MCF 10A (cell line): ENCODE measurements at regions of chr15 and their contacts with region 1.

Region 1: GRCh38 chr15:34587717-34588674 is 4.5 kb upstream of the GOLGA8B start:
- DNase-seq: peak; percentile 88
- H3K4me3 Mint-ChIP-seq: peak overlapping the region; percentile 73
- H3K27ac Mint-ChIP-seq: peak overlapping the region; percentile 52
- H3K4me1 Mint-ChIP-seq: no peaks in the 10 kb centered on the region
- H3K27me3 Mint-ChIP-seq: peaks cover 11% of the 10 kb centered on the region
- CTCF ChIP-seq: peak; percentile 70

Region 2: DNA sequence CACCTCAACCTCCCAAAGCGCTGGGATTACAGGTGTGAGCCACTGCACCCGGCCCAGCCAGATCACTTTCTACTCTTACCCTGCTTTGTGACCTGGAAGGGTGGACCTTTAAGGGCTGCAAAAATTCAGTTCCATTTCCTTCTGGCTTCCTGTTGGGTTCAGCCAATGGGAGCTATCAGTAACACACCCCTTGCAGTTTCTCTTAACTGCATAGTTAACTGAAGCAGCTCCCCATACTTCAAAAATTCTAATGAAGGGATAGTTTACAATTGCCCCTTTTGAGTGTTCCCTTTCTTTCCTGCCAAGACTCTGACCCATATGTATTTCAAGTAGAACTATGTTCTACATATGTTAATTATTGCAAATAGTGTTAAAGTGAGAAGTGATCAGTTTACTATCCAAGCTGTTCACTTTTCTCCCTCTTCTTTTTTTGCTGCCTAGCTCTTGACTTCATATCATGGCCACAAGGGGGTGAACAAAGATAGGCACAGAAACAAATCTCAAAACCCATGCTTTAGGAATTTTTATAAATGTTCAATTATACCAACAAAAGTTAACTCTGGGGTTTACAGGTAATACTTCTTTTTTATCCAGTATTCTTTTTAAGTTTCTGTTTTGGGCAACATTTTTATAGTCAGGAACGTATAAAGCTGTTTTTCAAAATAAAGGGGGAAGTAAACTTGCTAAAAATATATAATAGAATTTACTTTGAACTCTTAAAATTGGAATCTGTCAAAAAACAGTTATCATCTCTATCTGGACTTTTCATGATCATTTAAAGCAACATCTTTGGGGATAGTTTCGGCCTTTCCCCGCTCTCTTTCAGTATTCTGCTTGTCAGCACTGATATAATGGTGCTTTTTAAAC is 478.0 kb before region 1 on chr15:
- CTCF ChIA-PET with region 1: interaction called, 6 read pairs
- POLR2A ChIA-PET with region 1: interaction called, 4 read pairs
- intact Hi-C with region 1: loop called (anchors 1 kb)
- DNase-seq: peak; percentile 59
- H3K4me3 Mint-ChIP-seq: no peak overlapping the region
- H3K27ac Mint-ChIP-seq: no peak overlapping the region
- H3K4me1 Mint-ChIP-seq: no peaks in the 10 kb centered on the region
- H3K27me3 Mint-ChIP-seq: no peaks in the 10 kb centered on the region
- CTCF ChIP-seq: peak; percentile 64

Region 3: DNA sequence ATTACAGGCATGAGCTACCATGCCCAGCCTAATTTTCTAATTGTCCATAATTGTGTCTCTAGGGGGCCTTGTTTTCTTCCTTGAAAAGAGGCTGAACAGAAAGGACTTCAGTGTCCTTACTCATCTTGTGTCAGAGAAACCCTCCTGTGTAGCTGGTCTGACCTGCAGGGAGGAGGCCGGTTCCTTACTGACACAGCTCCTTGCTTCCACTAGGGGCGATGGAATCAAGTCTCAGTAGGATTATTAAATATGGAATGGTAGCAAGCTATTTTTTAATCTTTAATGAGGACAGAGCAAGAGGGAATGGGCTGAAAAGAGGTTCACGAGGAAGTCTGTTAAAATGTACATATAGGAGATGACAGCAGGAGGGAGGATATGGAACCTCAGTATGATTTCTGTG is 229.6 kb before region 1 on chr15:
- CTCF ChIA-PET with region 1: interaction called, 10 read pairs
- POLR2A ChIA-PET with region 1: no interaction called
- intact Hi-C with region 1: no loop called
- DNase-seq: no peak
- H3K4me3 Mint-ChIP-seq: no peak overlapping the region
- H3K27ac Mint-ChIP-seq: no peak overlapping the region
- H3K4me1 Mint-ChIP-seq: peaks cover 13% of the 10 kb centered on the region
- H3K27me3 Mint-ChIP-seq: no peaks in the 10 kb centered on the region
- CTCF ChIP-seq: peak; percentile 17

Region 4: DNA sequence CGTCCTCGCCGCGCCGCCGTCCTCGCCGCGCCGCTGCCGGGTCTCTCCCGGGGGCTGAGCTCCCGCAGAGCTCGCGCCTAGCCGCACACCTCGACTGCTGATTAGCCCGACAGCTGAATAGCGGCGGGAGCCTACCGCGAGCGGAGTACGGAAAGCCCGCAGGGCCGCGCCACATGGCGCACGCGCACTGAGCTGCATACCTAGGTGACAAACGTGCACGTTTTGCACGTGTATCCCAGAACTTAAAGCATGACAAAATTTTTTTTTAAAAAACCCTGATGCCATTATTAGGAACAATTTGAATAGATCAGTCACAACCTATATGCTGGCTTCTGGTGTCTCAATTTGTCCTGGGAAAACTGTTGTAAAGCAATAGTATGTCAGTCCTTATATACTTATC is 150.3 kb before region 1 on chr15 and contains the start of gene GOLGA8A:
- CTCF ChIA-PET with region 1: interaction called, 8 read pairs
- POLR2A ChIA-PET with region 1: interaction called, 6 read pairs
- intact Hi-C with region 1: loop called (anchors 2 kb)
- DNase-seq: peak; percentile 76
- H3K4me3 Mint-ChIP-seq: peak within 1 kb of the TSS; percentile 82
- H3K27ac Mint-ChIP-seq: peak within 1 kb of the TSS; percentile 87
- H3K4me1 Mint-ChIP-seq: peaks cover 17% of the 10 kb centered on the region
- H3K27me3 Mint-ChIP-seq: no peaks in the 10 kb centered on the region
- CTCF ChIP-seq: no peak
- total RNA-seq, gene GOLGA8A: 173 and 192 TPM in 2 replicates

Region 5: GRCh38 chr15:34610354-34610753 is 22.4 kb after region 1 on chr15:
- CTCF ChIA-PET with region 1: no interaction called
- POLR2A ChIA-PET with region 1: no interaction called
- intact Hi-C with region 1: no loop called
- DNase-seq: peak; percentile 25
- H3K4me3 Mint-ChIP-seq: no peak overlapping the region
- H3K27ac Mint-ChIP-seq: no peak overlapping the region
- H3K4me1 Mint-ChIP-seq: peaks cover 5% of the 10 kb centered on the region
- H3K27me3 Mint-ChIP-seq: peaks cover 89% of the 10 kb centered on the region
- CTCF ChIP-seq: peak; percentile 23

Region 6: GRCh38 chr15:34718681-34719641 is 131.0 kb after region 1 on chr15:
- CTCF ChIA-PET with region 1: no interaction called
- POLR2A ChIA-PET with region 1: no interaction called
- intact Hi-C with region 1: no loop called
- DNase-seq: no peak
- H3K4me3 Mint-ChIP-seq: no peak overlapping the region
- H3K27ac Mint-ChIP-seq: no peak overlapping the region
- H3K4me1 Mint-ChIP-seq: peaks cover 9% of the 10 kb centered on the region
- H3K27me3 Mint-ChIP-seq: peaks cover under 1% of the 10 kb centered on the region
- CTCF ChIP-seq: no peak